Psoas muscle (tissue), 8 donors: ENCODE measurements at regions of chr17 and their contacts with region 1.

Region 1: GRCh38 chr17:17919169-17920107 is 52.8 kb downstream of the TOM1L2 start:
- DNase-seq: peak; percentile 62 to 82
- ATAC-seq: peak; percentile 61 to 74 (median 65)
- H3K4me3 ChIP-seq: no peak overlapping the region
- H3K27ac ChIP-seq: peak overlapping the region; percentile 54
- H3K4me1 ChIP-seq: peaks cover 59% of the 10 kb centered on the region
- H3K27me3 ChIP-seq: no peaks in the 10 kb centered on the region
- CTCF ChIP-seq: peak; percentile 71

Region 2: GRCh38 chr17:17877529-17878358 is 41.7 kb before region 1 on chr17:
- intact Hi-C with region 1: loop called in 1 of 2 experiments (anchors 5 kb)
- DNase-seq: peak; percentile 78 to 84
- ATAC-seq: peak; percentile 85 to 90 (median 88)
- H3K4me3 ChIP-seq: peak overlapping the region; percentile 39
- H3K27ac ChIP-seq: peak overlapping the region; percentile 89
- H3K4me1 ChIP-seq: peaks cover 50% of the 10 kb centered on the region
- H3K27me3 ChIP-seq: no peaks in the 10 kb centered on the region
- CTCF ChIP-seq: no peak

Region 3: GRCh38 chr17:17966399-17966798 is 47.0 kb after region 1 on chr17:
- intact Hi-C with region 1: loop called in 1 of 2 experiments (anchors 5 kb)
- DNase-seq: no peak
- ATAC-seq: no peak
- H3K4me3 ChIP-seq: no peak overlapping the region
- H3K27ac ChIP-seq: peak overlapping the region; percentile 60
- H3K4me1 ChIP-seq: peaks cover 50% of the 10 kb centered on the region
- H3K27me3 ChIP-seq: no peaks in the 10 kb centered on the region
- CTCF ChIP-seq: no peak

Region 4: DNA sequence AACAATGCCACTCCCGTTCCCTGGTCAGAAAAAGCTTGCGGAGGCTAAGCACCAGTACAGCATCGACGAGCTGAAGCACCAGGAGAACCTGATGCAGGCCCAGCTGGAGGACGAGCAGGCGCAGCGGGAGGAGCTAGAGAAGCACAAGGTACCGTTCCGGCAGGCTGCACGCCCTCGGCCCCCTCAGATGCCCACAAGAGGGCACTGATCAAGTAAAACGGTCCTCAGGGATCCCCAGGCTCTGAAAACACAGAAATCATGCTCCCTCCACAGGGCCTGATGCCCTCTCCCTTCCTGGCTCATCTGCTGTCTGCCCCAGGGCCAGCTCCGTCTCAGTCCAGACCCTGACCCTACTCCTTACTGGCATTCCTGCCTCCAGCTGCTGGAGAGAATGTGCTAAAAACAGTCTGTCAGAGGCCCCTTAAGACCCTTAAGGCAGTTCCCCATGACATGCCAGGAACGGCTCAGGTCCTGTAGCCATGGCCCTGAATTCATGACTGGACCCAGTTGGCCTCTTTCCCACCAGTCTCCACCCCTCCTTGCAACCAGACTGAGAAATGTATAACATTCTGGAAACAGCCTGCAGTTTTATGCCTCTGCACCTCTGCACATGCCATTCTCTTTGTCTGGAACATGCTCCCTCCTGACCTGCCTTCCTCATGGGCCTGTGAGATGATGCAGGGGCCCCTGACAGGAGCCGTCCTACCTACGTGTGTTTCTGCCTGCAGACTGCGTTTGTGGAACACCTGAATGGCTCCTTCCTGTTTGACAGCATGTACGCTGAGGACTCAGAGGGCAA is 75.0 kb after region 1 on chr17:
- intact Hi-C with region 1: no loop called
- DNase-seq: peak in 1 of 2 donors; percentile 29
- ATAC-seq: peak in 3 of 4 donors; percentile 29 to 49 (median 47)
- H3K4me3 ChIP-seq: no peak overlapping the region
- H3K27ac ChIP-seq: no peak overlapping the region
- H3K4me1 ChIP-seq: peaks cover 21% of the 10 kb centered on the region
- H3K27me3 ChIP-seq: no peaks in the 10 kb centered on the region
- CTCF ChIP-seq: peak; percentile 16

Region 5: GRCh38 chr17:18038861-18039534 is 119.6 kb after region 1 on chr17 and contains the starts of genes ATPAF2 and GID4:
- intact Hi-C with region 1: loop called (anchors 5 to 10 kb)
- DNase-seq: peak; percentile 100
- ATAC-seq: peak; percentile 93 to 94 (median 93)
- H3K4me3 ChIP-seq: peak within 1 kb of the TSS; percentile 90
- H3K27ac ChIP-seq: peak within 1 kb of the TSS; percentile 90
- H3K4me1 ChIP-seq: peaks cover 39% of the 10 kb centered on the region
- H3K27me3 ChIP-seq: no peaks in the 10 kb centered on the region
- CTCF ChIP-seq: no peak
- total RNA-seq, gene ATPAF2: 23.9 to 39.7 (median 30.4) TPM
- total RNA-seq, gene GID4: 22.4 to 39.6 (median 38.5) TPM